Ascending aorta (tissue), 2 donors: ENCODE measurements at regions of chr2 and their contacts with region 1.

Region 1: GRCh38 chr2:223944703-223945531 is at the start of gene WDFY1:
- DNase-seq: peak; percentile 63 to 94
- H3K4me3 ChIP-seq: peak within 1 kb of the TSS; percentile 80 to 92
- H3K27ac ChIP-seq: peak within 1 kb of the TSS; percentile 96 to 98
- H3K4me1 ChIP-seq: peaks cover 8 to 10% of the 10 kb centered on the region in 2 donors
- H3K27me3 ChIP-seq: no peaks in the 10 kb centered on the region
- CTCF ChIP-seq: no peak
- total RNA-seq, gene WDFY1: 26.2 TPM

Region 2: DNA sequence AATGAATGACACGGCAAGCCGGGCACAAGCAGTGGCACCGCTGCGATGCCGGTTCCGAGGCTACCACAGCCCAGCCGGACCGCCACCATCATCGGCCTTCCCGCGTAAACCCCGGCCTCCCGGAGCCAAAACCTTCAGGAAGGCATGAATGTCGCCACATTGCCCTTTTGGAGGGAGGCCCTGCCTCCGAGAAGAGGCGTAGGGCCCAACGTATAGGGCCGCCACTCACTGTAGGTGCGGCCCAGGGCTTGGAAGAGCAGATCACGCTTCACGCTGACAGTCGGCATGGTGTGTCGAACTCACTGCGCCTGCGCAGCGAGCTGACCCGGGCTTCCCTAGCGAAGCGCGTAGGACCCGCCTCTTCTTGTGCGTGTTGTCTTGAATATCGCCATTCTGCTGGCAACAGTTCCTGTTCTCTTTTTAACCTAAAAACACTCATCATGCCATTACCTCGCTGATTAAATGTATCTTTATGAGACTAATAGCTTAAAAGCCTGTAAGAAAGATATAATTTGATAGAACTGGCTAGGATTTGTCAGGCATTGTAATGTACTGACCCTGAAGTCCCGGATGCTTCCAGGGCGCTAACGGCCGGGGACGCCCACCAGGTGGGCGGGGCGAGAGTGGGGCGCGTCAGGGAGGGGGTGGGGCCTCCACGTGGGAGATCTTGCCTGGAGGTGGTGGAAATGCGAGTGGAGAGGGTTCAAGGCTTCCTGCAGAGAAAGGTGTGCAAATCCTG is 1289.0 kb before region 1 on chr2 and contains the start of gene FARSB:
- intact Hi-C with region 1: loop called (anchors 10 kb)
- DNase-seq: peak; percentile 65 to 96
- H3K4me3 ChIP-seq: peak within 1 kb of the TSS; percentile 68 to 88
- H3K27ac ChIP-seq: peak within 1 kb of the TSS; percentile 82 to 85
- H3K4me1 ChIP-seq: peaks cover 3 to 12% of the 10 kb centered on the region in 2 donors
- H3K27me3 ChIP-seq: no peaks in the 10 kb centered on the region
- CTCF ChIP-seq: no peak
- total RNA-seq, gene FARSB: 4.4 TPM